ENCODE measurements at regions of chr17 and their contacts with region 1.

Region 1: GRCh38 chr17:45640141-45640850 is 143.8 kb upstream of the CRHR1 start:
- DNase-seq: peak; percentile 46 to 70 (median 59)
- ATAC-seq: peak; percentile 90
- H3K4me3 ChIP-seq: no peak overlapping the region
- H3K4me3 Mint-ChIP-seq: no peak overlapping the region
- H3K27ac ChIP-seq: no peak overlapping the region
- H3K27ac Mint-ChIP-seq: peak overlapping the region in 6 of 9 donors; percentile 42 to 88 (median 64)
- H3K4me1 ChIP-seq: peaks cover 5 to 6% of the 10 kb centered on the region in 2 donors
- H3K4me1 Mint-ChIP-seq: peaks cover 5 to 12% (median 7%) of the 10 kb centered on the region in 7 donors
- H3K27me3 ChIP-seq: no peaks in the 10 kb centered on the region
- H3K27me3 Mint-ChIP-seq: no peaks in the 10 kb centered on the region

Region 2: GRCh38 chr17:45656527-45657181 is 16.4 kb after region 1 on chr17:
- CTCF ChIA-PET with region 1: no interaction called
- POLR2A ChIA-PET with region 1: no interaction called
- intact Hi-C with region 1: no loop called
- DNase-seq: no peak
- ATAC-seq: no peak
- H3K4me3 ChIP-seq: no peak overlapping the region
- H3K4me3 Mint-ChIP-seq: no peak overlapping the region
- H3K27ac ChIP-seq: no peak overlapping the region
- H3K27ac Mint-ChIP-seq: no peak overlapping the region
- H3K4me1 ChIP-seq: no peaks in the 10 kb centered on the region
- H3K4me1 Mint-ChIP-seq: no peaks in the 10 kb centered on the region
- H3K27me3 ChIP-seq: no peaks in the 10 kb centered on the region
- H3K27me3 Mint-ChIP-seq: peaks cover 0 to 20% (median 10%) of the 10 kb centered on the region in 5 donors

Region 3: GRCh38 chr17:45812102-45812501 is 171.8 kb after region 1 on chr17:
- CTCF ChIA-PET with region 1: no interaction called
- POLR2A ChIA-PET with region 1: no interaction called
- intact Hi-C with region 1: no loop called
- DNase-seq: no peak
- ATAC-seq: no peak
- H3K4me3 ChIP-seq: no peak overlapping the region
- H3K4me3 Mint-ChIP-seq: no peak overlapping the region
- H3K27ac ChIP-seq: no peak overlapping the region
- H3K27ac Mint-ChIP-seq: no peak overlapping the region
- H3K4me1 ChIP-seq: no peaks in the 10 kb centered on the region
- H3K4me1 Mint-ChIP-seq: peaks cover 0 to 1% (median 0%) of the 10 kb centered on the region in 7 donors
- H3K27me3 ChIP-seq: no peaks in the 10 kb centered on the region
- H3K27me3 Mint-ChIP-seq: peaks cover 0 to 5% (median 4%) of the 10 kb centered on the region in 5 donors

Region 4: GRCh38 chr17:45828628-45829027 is 188.3 kb after region 1 on chr17:
- CTCF ChIA-PET with region 1: interaction called, 32 read pairs
- POLR2A ChIA-PET with region 1: no interaction called
- intact Hi-C with region 1: loop called in 1 of 2 experiments (anchors 1 kb)
- DNase-seq: no peak
- ATAC-seq: no peak
- H3K4me3 ChIP-seq: no peak overlapping the region
- H3K4me3 Mint-ChIP-seq: peak overlapping the region in 1 of 10 donors; percentile 6
- H3K27ac ChIP-seq: no peak overlapping the region
- H3K27ac Mint-ChIP-seq: no peak overlapping the region
- H3K4me1 ChIP-seq: no peaks in the 10 kb centered on the region
- H3K4me1 Mint-ChIP-seq: peaks cover 0 to 15% (median 5%) of the 10 kb centered on the region in 7 donors
- H3K27me3 ChIP-seq: no peaks in the 10 kb centered on the region
- H3K27me3 Mint-ChIP-seq: peaks cover 0 to 6% (median 0%) of the 10 kb centered on the region in 5 donors

Region 5: GRCh38 chr17:45852535-45853297 is 212.4 kb after region 1 on chr17:
- CTCF ChIA-PET with region 1: interaction called, 4 read pairs
- POLR2A ChIA-PET with region 1: no interaction called
- intact Hi-C with region 1: loop called (anchors 5 kb)
- DNase-seq: peak in 7 of 9 donors; percentile 34 to 62 (median 47)
- ATAC-seq: peak; percentile 61
- H3K4me3 ChIP-seq: no peak overlapping the region
- H3K4me3 Mint-ChIP-seq: peak overlapping the region in 2 of 10 donors; percentile 21 to 27
- H3K27ac ChIP-seq: no peak overlapping the region
- H3K27ac Mint-ChIP-seq: no peak overlapping the region
- H3K4me1 ChIP-seq: no peaks in the 10 kb centered on the region
- H3K4me1 Mint-ChIP-seq: peaks cover 0 to 7% (median 3%) of the 10 kb centered on the region in 7 donors
- H3K27me3 ChIP-seq: no peaks in the 10 kb centered on the region
- H3K27me3 Mint-ChIP-seq: peaks cover 7 to 17% (median 15%) of the 10 kb centered on the region in 5 donors